Left colon (tissue), 2 donors: ENCODE measurements at regions of chr21 and their contacts with region 1.

Region 1: GRCh38 chr21:45478115-45478801 is 64.0 kb downstream of the SLC19A1 start:
- DNase-seq: peak; percentile 52 to 74
- ATAC-seq: peak; percentile 77

Region 2: GRCh38 chr21:45596704-45597318 is 118.6 kb after region 1 on chr21:
- intact Hi-C with region 1: loop called in 1 of 2 experiments (anchors 5 kb)
- DNase-seq: peak; percentile 55 to 89
- ATAC-seq: peak; percentile 93

Region 3: DNA sequence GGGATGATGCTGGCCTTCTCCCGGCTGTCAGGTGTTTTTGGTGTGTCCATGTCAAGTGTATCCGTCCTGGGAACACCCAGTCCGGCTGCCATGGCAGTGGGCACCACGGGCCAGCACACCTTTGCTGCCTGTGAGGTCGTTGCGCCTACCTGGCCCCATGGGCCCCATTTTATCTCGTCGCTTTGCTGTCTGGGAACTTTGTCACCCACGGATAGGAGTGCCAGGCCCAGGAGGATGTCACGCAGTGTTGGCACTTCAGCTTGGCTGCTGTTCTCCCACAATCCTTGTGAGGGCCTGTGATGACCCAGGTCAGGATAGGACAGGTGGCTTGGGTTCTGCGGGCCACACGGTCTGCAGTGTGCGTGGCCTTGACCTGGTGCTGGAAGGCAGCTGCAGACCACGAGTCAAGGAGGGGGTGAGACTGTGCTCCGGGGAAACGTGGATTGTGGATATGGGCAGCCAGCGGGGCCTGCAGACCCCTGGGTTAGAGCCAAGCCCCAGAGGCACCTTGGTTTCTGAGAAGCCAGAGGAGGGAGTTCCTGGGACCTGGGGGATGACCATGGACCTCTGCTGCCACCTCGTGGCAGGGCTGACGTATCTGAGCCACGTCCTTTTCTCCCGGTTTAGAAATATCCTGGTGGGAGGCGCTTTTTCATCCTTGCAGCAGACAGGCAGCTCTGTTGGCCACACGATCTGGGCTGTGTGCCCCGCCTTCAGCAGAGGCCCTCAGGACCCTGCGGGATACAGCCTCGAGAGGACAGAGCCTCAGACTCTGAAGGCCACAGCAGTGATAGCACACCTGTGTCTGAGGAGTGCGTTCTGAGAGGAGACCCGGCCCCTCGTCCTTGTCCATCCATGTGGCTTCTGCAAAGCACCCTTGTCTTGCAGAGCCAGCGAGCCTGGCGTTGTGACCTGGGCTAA is 342.2 kb after region 1 on chr21:
- intact Hi-C with region 1: loop called in 1 of 2 experiments (anchors 10 kb)
- DNase-seq: peak; percentile 72 to 81
- ATAC-seq: peak; percentile 93